CD4-positive, alpha-beta memory T cell (primary cell): ENCODE measurements at regions of chr3 and their contacts with region 1.

Region 1: DNA sequence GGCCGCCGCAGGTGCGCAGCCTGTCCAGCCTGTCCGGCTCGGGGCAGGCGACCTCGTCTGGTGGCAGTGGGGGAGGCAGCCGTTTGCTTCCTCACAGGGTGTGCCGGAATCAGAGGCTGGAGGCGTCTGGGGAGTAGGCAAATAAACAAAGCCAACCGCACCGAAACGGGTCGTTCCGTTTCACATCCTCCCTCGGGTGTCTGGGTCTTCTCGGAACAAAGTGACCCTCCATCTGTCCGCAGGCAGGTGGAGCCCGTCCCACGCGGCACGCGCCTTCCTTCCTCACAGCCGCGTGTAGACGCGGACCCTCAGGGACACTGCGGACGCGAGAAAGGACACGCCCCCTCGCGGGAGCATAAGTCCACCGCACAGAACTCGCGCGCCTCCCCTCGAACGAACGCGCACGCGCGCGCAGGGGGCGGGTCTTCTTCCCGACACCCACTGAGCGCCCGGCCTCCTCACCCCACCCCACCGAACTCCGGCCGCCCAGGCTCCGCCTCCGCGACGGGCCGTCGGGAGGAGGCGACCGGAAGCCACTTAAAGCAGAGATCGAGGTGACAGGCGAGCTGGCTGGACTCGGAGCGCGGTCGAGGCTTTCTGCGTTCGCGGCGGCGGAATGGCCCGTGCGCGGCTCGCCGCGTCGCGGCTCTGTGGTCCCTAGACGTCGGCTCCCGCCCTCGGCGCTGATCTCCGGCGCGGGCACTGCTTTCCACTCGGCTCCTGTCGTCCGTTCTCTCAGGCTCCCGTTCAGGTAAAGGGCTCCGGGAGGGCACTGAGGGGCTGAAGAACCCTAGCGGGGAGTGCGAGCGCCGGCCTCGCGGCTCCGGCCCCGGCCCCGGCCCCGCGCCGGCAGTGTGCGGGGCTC is at the start of gene TIPARP:
- DNase-seq: peak; percentile 97 to 100 (median 99)
- H3K4me3 ChIP-seq: peak within 1 kb of the TSS; percentile 76 to 91
- H3K4me3 Mint-ChIP-seq: peak within 1 kb of the TSS; percentile 93 to 99 (median 96)
- H3K27ac ChIP-seq: peak within 1 kb of the TSS; percentile 94
- H3K27ac Mint-ChIP-seq: peak within 1 kb of the TSS; percentile 95 to 100 (median 99)
- H3K4me1 ChIP-seq: peaks cover 43% of the 10 kb centered on the region
- H3K4me1 Mint-ChIP-seq: peaks cover 32 to 46% (median 37%) of the 10 kb centered on the region in 4 donors
- H3K27me3 ChIP-seq: no peaks in the 10 kb centered on the region
- H3K27me3 Mint-ChIP-seq: no peaks in the 10 kb centered on the region
- total RNA-seq, gene TIPARP: 108 to 119 TPM

Region 2: GRCh38 chr3:156483961-156484787 is 190.1 kb before region 1 on chr3:
- CTCF ChIA-PET with region 1: interaction called, 6 read pairs
- POLR2A ChIA-PET with region 1: interaction called, 20 read pairs
- intact Hi-C with region 1: loop called (anchors 1 kb)
- DNase-seq: peak; percentile 55 to 81 (median 64)
- H3K4me3 ChIP-seq: peak overlapping the region; percentile 42 to 55
- H3K4me3 Mint-ChIP-seq: peak overlapping the region; percentile 21 to 87 (median 77)
- H3K27ac ChIP-seq: peak overlapping the region; percentile 63
- H3K27ac Mint-ChIP-seq: peak overlapping the region; percentile 77 to 94 (median 92)
- H3K4me1 ChIP-seq: peaks cover 43% of the 10 kb centered on the region
- H3K4me1 Mint-ChIP-seq: peaks cover 32 to 52% (median 39%) of the 10 kb centered on the region in 4 donors
- H3K27me3 ChIP-seq: no peaks in the 10 kb centered on the region
- H3K27me3 Mint-ChIP-seq: no peaks in the 10 kb centered on the region

Region 3: GRCh38 chr3:156643729-156644389 is 30.4 kb before region 1 on chr3:
- CTCF ChIA-PET with region 1: interaction called, 8 read pairs
- POLR2A ChIA-PET with region 1: interaction called, 41 read pairs
- intact Hi-C with region 1: no loop called
- DNase-seq: peak; percentile 22 to 45 (median 38)
- H3K4me3 ChIP-seq: no peak overlapping the region
- H3K4me3 Mint-ChIP-seq: peak overlapping the region; percentile 37 to 83 (median 61)
- H3K27ac ChIP-seq: no peak overlapping the region
- H3K27ac Mint-ChIP-seq: peak overlapping the region in 6 of 7 donors; percentile 1 to 88 (median 73)
- H3K4me1 ChIP-seq: peaks cover 21% of the 10 kb centered on the region
- H3K4me1 Mint-ChIP-seq: peaks cover 7 to 15% (median 11%) of the 10 kb centered on the region in 4 donors
- H3K27me3 ChIP-seq: no peaks in the 10 kb centered on the region
- H3K27me3 Mint-ChIP-seq: peaks cover 3 to 5% of the 10 kb centered on the region in 2 donors

Region 4: DNA sequence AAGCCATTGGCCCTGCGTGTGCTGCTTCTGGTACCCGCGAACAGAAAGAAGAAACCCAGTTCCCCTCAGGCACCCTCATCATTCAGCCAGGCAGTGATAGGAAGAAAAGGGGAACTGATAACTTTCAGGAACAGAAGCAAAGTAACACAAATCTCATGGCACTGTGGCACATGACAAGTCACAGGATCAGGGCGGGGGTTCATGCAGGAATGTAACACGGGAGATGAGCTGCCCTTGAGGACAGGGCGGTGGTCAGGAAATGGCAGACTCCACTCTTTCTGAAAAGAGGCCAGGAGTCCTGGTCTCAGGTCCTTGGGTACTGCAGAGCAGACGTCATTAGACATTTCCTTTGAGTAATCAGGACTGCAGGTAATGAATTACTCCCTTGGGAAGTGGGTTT is 390.1 kb after region 1 on chr3:
- CTCF ChIA-PET with region 1: interaction called, 3 read pairs
- POLR2A ChIA-PET with region 1: interaction called, 59 read pairs
- intact Hi-C with region 1: loop called (anchors 1 kb)
- DNase-seq: no peak
- H3K4me3 ChIP-seq: no peak overlapping the region
- H3K4me3 Mint-ChIP-seq: no peak overlapping the region
- H3K27ac ChIP-seq: no peak overlapping the region
- H3K27ac Mint-ChIP-seq: peak overlapping the region in 3 of 7 donors; percentile 39 to 70 (median 42)
- H3K4me1 ChIP-seq: peaks cover 38% of the 10 kb centered on the region
- H3K4me1 Mint-ChIP-seq: peaks cover 23 to 45% (median 36%) of the 10 kb centered on the region in 4 donors
- H3K27me3 ChIP-seq: no peaks in the 10 kb centered on the region
- H3K27me3 Mint-ChIP-seq: peaks cover 0 to 2% of the 10 kb centered on the region in 2 donors

Region 5: DNA sequence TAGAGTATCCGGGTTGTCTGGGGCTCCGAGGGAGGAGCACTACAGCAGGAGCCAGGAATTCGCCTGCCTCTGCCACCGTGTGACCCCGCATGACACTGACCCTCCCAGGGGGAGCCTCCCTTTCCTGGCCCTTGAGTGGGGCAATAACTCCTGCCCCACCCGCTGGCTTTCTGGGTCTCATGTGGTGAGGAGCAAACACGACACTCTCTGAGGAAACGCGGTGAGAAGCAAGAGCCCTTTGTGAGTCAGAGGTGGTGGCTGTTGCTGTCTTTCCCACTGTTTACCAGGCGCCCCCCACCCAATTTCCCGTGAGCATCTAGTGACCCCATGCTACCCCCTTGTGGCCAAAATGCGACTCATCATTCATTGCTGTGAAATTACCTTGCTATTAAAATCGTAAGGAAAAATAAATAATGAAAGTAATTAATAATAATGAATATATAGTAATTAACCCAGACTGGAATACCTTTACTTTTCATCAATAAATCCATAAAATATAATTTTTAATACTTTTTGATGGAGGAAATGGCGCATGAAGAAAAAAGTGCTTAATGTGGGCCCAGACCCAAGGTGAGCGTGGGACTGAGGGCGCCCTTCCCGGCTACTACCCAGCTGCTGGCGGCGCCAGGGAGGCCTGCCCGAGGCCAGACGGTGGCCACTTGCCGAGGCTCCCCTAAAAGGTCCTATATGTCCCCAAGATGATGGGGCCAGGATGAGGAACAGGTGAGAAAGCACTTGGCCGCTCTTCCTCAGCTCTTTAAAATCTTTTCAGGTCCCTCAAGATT is 456.4 kb after region 1 on chr3:
- CTCF ChIA-PET with region 1: interaction called, 13 read pairs
- POLR2A ChIA-PET with region 1: interaction called, 40 read pairs
- intact Hi-C with region 1: loop called (anchors 1 kb)
- DNase-seq: peak; percentile 81 to 94 (median 84)
- H3K4me3 ChIP-seq: peak overlapping the region; percentile 4 to 45
- H3K4me3 Mint-ChIP-seq: peak overlapping the region; percentile 50 to 91 (median 76)
- H3K27ac ChIP-seq: peak overlapping the region; percentile 83
- H3K27ac Mint-ChIP-seq: peak overlapping the region; percentile 95 to 99 (median 97)
- H3K4me1 ChIP-seq: peaks cover 73% of the 10 kb centered on the region
- H3K4me1 Mint-ChIP-seq: peaks cover 48 to 86% (median 66%) of the 10 kb centered on the region in 4 donors
- H3K27me3 ChIP-seq: no peaks in the 10 kb centered on the region
- H3K27me3 Mint-ChIP-seq: no peaks in the 10 kb centered on the region